H1 (cell line): ENCODE measurements at regions of chr1 and their contacts with region 1.

Region 1: DNA sequence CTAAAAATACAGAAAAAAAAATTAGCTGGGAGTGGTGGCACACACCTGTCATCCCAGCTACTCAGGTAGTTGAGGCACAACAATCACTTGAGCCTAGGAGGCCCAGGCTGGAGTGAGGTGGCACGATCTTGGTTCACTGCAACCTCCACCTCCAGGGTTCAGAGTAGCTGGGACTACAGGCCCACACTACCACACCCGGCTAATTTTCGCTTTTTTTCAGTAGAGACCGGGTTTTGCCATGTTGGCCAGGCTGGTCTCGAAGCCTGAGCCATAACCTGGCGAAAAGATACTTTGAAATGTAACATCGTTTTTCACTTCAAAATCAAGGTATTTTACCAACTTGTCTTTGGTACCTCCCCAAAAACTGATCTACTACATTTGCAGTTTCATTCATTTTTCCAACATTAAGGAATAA is 6.1 kb downstream of the GAS5 start:
- DNase-seq: peak in 1 of 2 experiments; percentile 54
- H3K4me3 ChIP-seq: no peak overlapping the region
- H3K27ac ChIP-seq: no peak overlapping the region
- H3K4me1 ChIP-seq: peaks cover 2 to 10% (median 4%) of the 10 kb centered on the region in 4 experiments; a peak in 4 of 7 replicates
- H3K27me3 ChIP-seq: no peaks in the 10 kb centered on the region
- CTCF ChIP-seq: no peak
- EP300 ChIP-seq: no peak
- POLR2A ChIP-seq: peak in 1 of 2 experiments; percentile 84; a peak in 2 of 3 replicates
- RAD21 ChIP-seq: 0 out of 4 replicates have a peak, but pooled peaks of 1 of the 2 experiments have one; percentile 1

Region 2: DNA sequence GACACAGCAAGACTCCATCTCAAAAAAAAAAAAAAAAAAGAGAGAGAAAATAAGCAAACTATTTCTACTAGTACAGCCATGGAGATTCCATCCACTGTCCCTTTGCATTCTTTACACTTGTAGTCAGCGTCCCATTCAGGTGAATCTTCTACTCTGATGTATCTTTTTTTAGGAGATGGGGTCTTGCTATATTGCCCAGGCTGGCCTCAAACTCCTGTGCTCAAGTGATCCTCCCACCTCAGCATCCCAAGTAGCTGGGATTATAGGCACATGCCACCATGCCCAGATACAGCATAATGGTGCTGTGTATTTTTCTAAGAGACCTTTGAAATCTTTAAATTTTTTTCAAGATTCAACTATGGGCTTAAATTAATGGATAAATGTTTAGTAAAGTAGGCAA is 29.0 kb before region 1 on chr1:
- CTCF ChIA-PET with region 1: interaction called, 3 read pairs
- POLR2A ChIA-PET with region 1: interaction called, 166 read pairs
- DNase-seq: no peak
- H3K4me3 ChIP-seq: no peak overlapping the region
- H3K27ac ChIP-seq: no peak overlapping the region
- H3K4me1 ChIP-seq: no peaks in the 10 kb centered on the region
- H3K27me3 ChIP-seq: no peaks in the 10 kb centered on the region
- CTCF ChIP-seq: no peak
- EP300 ChIP-seq: no peak
- POLR2A ChIP-seq: no peak
- RAD21 ChIP-seq: no peak

Region 3: DNA sequence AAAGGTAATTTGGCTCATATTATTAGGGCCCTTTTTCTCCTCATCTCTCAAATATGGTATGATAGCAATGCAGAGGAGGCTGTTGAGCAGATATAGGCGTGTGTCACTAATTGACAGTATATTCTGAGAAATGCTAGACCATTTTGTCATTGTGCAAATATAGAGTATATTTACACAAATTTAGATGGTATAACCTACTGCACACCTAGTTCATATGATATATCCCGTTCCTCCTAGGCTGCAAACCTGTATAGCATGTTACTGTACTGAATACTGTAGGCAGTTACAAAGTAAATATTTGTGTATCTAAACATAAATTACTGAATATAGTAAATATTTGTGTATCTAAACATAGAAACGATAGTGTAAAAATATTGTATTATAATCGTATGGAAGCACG is 15.0 kb after region 1 on chr1:
- CTCF ChIA-PET with region 1: interaction called, 3 read pairs
- POLR2A ChIA-PET with region 1: interaction called, 475 read pairs
- DNase-seq: no peak
- H3K4me3 ChIP-seq: no peak overlapping the region
- H3K27ac ChIP-seq: no peak overlapping the region
- H3K4me1 ChIP-seq: no peaks in the 10 kb centered on the region
- H3K27me3 ChIP-seq: no peaks in the 10 kb centered on the region
- CTCF ChIP-seq: no peak
- EP300 ChIP-seq: no peak
- POLR2A ChIP-seq: no peak
- RAD21 ChIP-seq: no peak

Region 4: GRCh38 chr1:174008979-174009378 is 147.2 kb after region 1 on chr1:
- CTCF ChIA-PET with region 1: no interaction called
- POLR2A ChIA-PET with region 1: no interaction called
- DNase-seq: no peak
- H3K4me3 ChIP-seq: no peak overlapping the region
- H3K27ac ChIP-seq: no peak overlapping the region
- H3K4me1 ChIP-seq: no peaks in the 10 kb centered on the region
- H3K27me3 ChIP-seq: no peaks in the 10 kb centered on the region
- CTCF ChIP-seq: no peak
- EP300 ChIP-seq: no peak
- POLR2A ChIP-seq: no peak
- RAD21 ChIP-seq: no peak